ENCODE measurements at regions of chr5 and their contacts with region 1.

Region 1: DNA sequence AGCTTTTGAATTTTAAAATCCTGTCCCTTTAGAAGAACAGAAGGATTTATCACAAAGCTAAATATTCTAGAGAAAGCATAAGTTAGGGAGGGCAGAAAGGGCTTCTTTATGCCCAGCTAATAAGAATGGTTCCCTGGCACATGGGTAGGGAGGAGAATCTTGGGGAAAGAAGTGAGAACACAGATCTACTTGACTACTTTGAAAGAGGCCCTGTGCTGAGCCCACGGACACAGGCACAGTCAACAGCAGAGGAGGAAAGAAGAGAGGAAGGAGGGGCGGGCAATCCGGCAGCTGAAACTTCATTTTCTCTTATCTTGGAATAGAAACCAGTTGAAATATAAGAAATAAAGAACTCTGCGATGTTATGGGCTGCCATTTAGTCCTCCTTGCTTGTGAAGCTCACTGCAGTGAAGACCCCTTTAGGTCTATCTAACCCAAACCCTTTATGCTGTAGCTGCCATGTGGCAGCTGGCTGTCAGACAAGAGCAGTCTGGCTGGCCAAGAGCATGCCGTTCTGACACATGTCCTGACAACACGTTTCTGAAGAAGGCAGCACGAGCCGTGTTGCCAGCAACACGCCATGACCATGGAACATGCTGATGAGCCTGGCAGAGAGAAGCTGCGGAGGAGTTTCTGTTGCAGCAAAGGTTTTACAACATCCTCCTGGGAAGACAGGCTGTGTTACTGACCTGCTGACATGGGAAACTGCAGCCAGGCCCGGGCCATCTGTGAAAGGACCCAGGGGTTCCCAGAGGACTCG is 34.2 kb downstream of the ABLIM3 start:
- DNase-seq: peak; percentile 65 to 89 (median 79)
- ATAC-seq: peak; percentile 85 to 91 (median 90)
- H3K4me3 ChIP-seq: no peak overlapping the region
- H3K27ac ChIP-seq: peak overlapping the region; percentile 74 to 90 (median 84)
- H3K4me1 ChIP-seq: peaks cover 16 to 95% (median 73%) of the 10 kb centered on the region in 12 donors
- H3K27me3 ChIP-seq: no peaks in the 10 kb centered on the region
- CTCF ChIP-seq: no peak
- POLR2A ChIP-seq: no peak

Region 2: DNA sequence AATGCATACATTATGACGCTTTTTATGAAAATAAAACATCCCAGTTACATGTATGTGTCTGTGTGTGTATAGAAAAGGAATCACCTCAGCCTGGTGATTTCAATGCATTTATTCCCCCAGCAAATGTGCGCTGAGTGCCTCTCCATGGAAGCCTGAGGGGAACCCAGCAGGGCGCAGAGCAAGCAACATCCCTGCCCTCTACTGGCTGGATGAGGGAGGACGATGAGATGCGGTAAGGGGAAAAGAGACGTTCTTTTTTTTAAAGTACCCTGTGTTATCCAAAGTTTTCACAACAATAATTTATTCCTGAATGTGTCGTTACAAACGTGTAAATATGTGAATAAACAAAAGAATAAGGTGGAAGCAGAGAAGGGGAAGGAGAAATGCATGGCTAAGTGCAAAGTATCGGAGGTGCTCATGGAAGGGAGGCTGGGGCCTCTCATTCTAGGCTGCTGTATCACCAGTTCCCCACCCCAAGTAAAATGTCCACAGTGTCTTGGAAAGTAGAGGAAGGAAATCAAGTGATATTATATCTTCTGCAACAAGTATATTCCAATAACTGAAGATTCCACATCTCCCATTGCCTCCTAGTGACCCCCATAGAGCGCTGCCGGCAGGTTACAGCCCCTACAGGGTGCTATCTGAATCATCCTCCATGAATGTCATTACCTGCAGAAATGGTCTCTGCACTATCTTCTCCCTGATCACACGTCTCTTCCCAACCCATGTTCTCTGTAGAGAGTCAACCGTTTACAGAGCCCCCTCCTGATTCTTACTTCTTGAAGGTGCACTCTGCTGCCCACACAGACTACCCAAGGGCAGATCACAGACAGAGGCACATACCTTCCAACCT is 47.3 kb before region 1 on chr5:
- intact Hi-C with region 1: no loop called
- DNase-seq: peak in 1 of 5 donors; percentile 42
- ATAC-seq: peak in 3 of 4 donors; percentile 53 to 79 (median 68)
- H3K4me3 ChIP-seq: no peak overlapping the region
- H3K27ac ChIP-seq: no peak overlapping the region
- H3K4me1 ChIP-seq: peaks cover 0 to 14% (median 8%) of the 10 kb centered on the region in 12 donors
- H3K27me3 ChIP-seq: no peaks in the 10 kb centered on the region
- CTCF ChIP-seq: peak; percentile 47 to 80 (median 63)
- POLR2A ChIP-seq: no peak

Region 3: GRCh38 chr5:149215478-149216090 is 40.1 kb after region 1 on chr5:
- intact Hi-C with region 1: loop called in 1 of 10 experiments (anchors 5 kb)
- DNase-seq: peak in 4 of 5 donors; percentile 40 to 72 (median 66)
- ATAC-seq: peak in 2 of 4 donors; percentile 10 to 24
- H3K4me3 ChIP-seq: no peak overlapping the region
- H3K27ac ChIP-seq: peak overlapping the region in 9 of 12 donors; percentile 13 to 74 (median 47)
- H3K4me1 ChIP-seq: peaks cover 0 to 64% (median 44%) of the 10 kb centered on the region in 12 donors
- H3K27me3 ChIP-seq: no peaks in the 10 kb centered on the region
- CTCF ChIP-seq: no peak
- POLR2A ChIP-seq: no peak

Measured in heart left ventricle (tissue), 16 donors.